Activated CD4-positive, alpha-beta memory T cell treated with anti-CD3 and anti-CD28 coated beads for 36 hours (primary cell): ENCODE measurements at regions of chr11 and their contacts with region 1.

Region 1: DNA sequence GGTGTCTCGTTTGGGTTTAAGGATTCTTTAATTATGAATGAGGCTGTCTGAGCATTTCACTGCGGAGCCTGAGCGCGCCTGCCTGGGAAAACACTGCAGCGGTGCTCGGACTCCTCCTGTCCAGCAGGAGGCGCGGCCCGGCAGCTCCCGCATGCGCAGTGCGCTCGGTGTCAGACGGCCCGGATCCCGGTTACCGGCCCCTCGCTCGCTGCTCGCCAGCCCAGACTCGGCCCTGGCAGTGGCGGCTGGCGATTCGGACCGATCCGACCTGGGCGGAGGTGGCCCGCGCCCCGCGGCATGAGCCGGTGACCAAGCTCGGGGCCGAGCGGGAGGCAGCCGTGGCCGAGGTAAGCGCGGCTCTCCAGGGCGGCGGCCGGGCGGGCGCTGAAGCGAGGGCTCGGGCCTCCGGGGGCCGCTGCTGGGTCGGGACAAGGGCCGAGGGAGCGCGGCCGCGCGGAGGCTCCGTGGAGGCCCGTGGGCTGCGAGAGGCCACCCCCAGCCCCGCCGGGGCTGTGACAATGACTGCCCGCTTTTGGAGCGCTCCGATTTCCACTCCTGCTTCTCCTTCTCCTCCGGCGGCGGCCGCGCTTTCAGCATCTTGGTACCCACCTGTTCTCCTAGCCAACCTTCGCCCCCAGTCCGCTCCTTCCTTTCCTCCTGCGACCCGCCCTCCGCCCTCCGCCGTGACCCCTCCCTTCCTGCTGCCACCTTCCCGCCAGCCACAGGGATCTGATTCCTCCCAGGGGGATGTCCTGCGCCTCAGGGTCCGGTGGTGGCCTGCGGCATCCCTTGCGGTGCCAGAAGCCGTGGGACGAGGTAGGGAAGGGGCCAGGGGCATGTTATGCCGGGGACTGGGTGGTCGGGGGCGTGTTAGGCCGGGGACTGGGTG is at the start of gene EXT2:
- DNase-seq: peak; percentile 90
- H3K4me3 Mint-ChIP-seq: peak within 1 kb of the TSS; percentile 83
- H3K27ac Mint-ChIP-seq: no peak within 1 kb of the TSS
- H3K4me1 Mint-ChIP-seq: peaks cover 26% of the 10 kb centered on the region
- H3K27me3 Mint-ChIP-seq: no peaks in the 10 kb centered on the region
- total RNA-seq, gene EXT2: 27.0 to 28.1 TPM

Region 2: DNA sequence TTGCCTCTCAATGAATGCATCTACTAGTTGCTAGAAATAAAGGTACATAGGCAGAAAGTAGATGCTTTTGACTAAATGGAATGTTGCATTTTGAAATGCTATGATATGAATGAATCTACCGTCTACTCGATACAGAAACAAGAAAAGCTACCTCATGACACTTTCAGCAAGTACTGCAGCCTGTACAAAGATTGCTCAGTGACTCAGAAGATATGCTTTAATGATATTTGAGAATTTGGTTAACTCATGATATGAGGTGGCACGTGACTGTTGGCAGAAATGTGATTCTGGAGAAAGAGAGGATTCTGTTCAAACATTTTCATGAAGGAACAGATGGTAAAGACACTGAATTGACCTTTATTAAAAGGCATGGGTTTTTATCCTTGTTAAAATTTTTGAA is 339.2 kb before region 1 on chr11:
- CTCF ChIA-PET with region 1: no interaction called
- POLR2A ChIA-PET with region 1: no interaction called
- intact Hi-C with region 1: no loop called
- DNase-seq: no peak
- H3K4me3 Mint-ChIP-seq: no peak overlapping the region
- H3K27ac Mint-ChIP-seq: no peak overlapping the region
- H3K4me1 Mint-ChIP-seq: peaks cover 3% of the 10 kb centered on the region
- H3K27me3 Mint-ChIP-seq: no peaks in the 10 kb centered on the region

Region 3: DNA sequence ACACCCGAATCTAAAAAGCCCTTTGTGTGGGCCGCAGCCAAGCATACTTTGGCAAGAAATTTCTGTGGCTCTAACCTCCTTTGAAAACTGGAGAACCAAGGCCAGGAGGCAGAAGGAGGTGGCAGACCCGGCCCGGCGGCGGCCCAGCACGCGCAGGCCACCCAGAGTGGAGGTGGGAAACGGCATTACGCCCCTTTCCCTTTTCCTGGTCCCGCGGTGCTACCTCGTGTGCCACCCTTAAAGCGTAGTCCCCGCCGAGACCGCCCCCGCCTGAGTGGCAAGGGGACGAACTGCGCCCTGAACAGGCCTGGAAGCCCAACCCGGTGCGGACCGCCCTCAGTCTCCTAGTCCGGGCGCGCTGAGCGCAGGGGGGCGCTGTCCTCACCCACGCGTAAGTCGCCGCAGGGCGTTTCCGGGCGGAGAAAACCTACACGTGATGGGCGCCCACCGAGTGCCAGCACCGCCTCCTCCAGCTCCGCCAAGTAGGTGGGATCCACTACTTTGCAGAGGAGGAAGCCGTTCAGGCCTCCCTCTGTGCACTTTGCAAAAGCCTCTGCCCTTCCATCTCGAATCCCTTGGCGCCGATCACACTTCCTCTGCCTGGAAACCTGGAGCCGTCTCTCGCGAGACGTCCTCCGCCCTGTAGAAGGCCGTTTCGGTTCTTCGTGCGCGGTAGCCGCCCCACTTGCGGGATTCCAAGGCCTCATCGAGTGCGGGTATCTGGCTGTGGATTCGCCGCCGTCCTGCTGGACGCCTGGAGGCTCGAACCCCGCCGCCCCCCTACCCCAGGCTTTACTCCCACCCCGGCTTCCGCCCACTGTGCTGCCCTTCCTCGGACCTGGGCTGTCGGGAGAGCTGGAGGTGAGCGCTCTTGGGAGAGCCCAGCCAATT is 29.7 kb before region 1 on chr11 and contains the start of gene ACCS:
- CTCF ChIA-PET with region 1: interaction called, 21 read pairs
- POLR2A ChIA-PET with region 1: interaction called, 3 read pairs
- intact Hi-C with region 1: no loop called
- DNase-seq: peak; percentile 93
- H3K4me3 Mint-ChIP-seq: peak within 1 kb of the TSS; percentile 79
- H3K27ac Mint-ChIP-seq: peak within 1 kb of the TSS; percentile 86
- H3K4me1 Mint-ChIP-seq: peaks cover 24% of the 10 kb centered on the region
- H3K27me3 Mint-ChIP-seq: no peaks in the 10 kb centered on the region
- total RNA-seq, gene ACCS: 13.7 to 17.5 TPM

Region 4: GRCh38 chr11:44085330-44085729 is 10.4 kb before region 1 on chr11:
- CTCF ChIA-PET with region 1: interaction called, 28 read pairs
- POLR2A ChIA-PET with region 1: no interaction called
- intact Hi-C with region 1: no loop called
- DNase-seq: no peak
- H3K4me3 Mint-ChIP-seq: no peak overlapping the region
- H3K27ac Mint-ChIP-seq: no peak overlapping the region
- H3K4me1 Mint-ChIP-seq: no peaks in the 10 kb centered on the region
- H3K27me3 Mint-ChIP-seq: no peaks in the 10 kb centered on the region

Region 5: DNA sequence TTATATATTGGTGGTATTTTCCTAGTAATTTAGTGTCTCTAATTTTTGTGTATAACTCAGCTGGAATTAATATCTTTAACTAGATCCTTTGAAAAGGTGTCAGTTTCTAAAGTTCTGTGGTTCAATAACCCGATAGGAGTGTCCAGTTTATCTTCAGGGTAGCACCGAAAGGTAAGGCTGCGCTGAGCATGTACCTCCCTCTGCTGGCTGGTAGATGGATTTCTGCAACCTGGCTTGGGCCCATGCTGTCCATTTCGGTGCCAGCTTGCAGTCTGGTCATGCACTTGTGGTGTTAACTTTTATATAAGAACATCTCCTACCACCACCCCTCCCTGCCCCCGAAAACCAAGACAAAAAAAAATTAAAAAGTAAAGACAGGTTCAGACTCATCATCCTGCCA is 24.4 kb after region 1 on chr11:
- CTCF ChIA-PET with region 1: interaction called, 22 read pairs
- POLR2A ChIA-PET with region 1: no interaction called
- intact Hi-C with region 1: no loop called
- DNase-seq: no peak
- H3K4me3 Mint-ChIP-seq: no peak overlapping the region
- H3K27ac Mint-ChIP-seq: no peak overlapping the region
- H3K4me1 Mint-ChIP-seq: no peaks in the 10 kb centered on the region
- H3K27me3 Mint-ChIP-seq: no peaks in the 10 kb centered on the region

Region 6: GRCh38 chr11:44538375-44539054 is 442.8 kb after region 1 on chr11:
- CTCF ChIA-PET with region 1: interaction called, 13 read pairs
- POLR2A ChIA-PET with region 1: no interaction called
- intact Hi-C with region 1: loop called (anchors 5 kb)
- DNase-seq: peak; percentile 82
- H3K4me3 Mint-ChIP-seq: no peak overlapping the region
- H3K27ac Mint-ChIP-seq: no peak overlapping the region
- H3K4me1 Mint-ChIP-seq: peaks cover 3% of the 10 kb centered on the region
- H3K27me3 Mint-ChIP-seq: peaks cover 4% of the 10 kb centered on the region